PC-9 (cell line): ENCODE measurements at regions of chr11 and their contacts with region 1.

Region 1: DNA sequence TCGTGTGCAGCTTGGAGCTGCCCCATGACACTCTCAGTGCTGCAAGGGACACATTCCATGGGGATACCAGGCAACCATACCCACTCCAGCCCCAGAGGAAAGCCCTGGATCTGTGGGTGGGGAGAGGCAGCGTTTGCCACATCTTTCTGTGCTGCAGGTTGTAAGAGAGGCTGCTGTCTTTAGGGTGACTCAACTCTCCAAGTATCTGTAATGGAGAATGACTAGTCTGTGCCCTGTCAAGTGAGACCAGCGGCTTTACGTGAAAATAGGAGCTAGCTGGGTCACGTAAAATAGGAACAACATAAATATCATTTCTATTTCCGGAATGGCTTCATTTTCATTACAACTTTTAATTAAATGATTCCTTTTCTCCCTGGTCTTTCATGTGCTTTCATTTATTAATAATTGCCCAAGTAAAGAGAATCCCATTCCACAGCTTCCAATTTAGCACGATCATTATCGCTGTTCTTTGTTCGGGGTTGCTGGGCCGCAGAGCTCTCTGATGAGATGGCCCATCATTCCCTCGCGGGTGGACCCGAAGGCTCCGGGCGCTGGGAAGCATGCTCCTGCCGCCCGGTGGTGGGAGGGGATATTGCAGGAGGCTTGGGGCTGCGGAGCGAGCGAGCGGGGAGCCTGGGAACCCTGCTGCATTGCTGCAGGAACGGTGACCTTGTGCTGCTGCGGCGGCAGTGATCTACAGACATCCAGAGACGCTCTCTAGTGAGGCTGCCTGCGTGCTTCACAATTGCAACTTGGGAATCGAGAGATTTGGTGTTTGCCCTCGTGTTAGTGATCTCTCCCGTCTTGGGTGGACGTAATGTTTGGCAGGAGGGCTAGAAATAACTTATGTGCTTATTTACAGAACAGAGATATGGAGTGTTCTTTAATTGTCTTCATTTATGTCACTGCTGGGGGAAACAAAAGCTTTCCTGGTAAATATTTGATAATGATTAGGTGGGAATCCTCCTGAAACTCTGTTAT is 10.6 kb downstream of the SLC6A5 start:
- DNase-seq: peak; percentile 34 to 67
- H3K4me3 ChIP-seq: no peak overlapping the region
- H3K27ac ChIP-seq: no peak overlapping the region
- H3K4me1 ChIP-seq: no peaks in the 10 kb centered on the region
- H3K27me3 ChIP-seq: peaks cover 54% of the 10 kb centered on the region
- CTCF ChIP-seq: peak; percentile 91

Region 2: GRCh38 chr11:20397281-20397680 is 212.7 kb before region 1 on chr11:
- CTCF ChIA-PET with region 1: no interaction called
- POLR2A ChIA-PET with region 1: no interaction called
- intact Hi-C with region 1: loop called (anchors 1 kb)
- DNase-seq: no peak
- H3K4me3 ChIP-seq: no peak overlapping the region
- H3K27ac ChIP-seq: no peak overlapping the region
- H3K4me1 ChIP-seq: no peaks in the 10 kb centered on the region
- H3K27me3 ChIP-seq: no peaks in the 10 kb centered on the region
- CTCF ChIP-seq: peak; percentile 60